SK-N-SH (cell line): ENCODE measurements at regions of chr3 and their contacts with region 1.

Region 1: DNA sequence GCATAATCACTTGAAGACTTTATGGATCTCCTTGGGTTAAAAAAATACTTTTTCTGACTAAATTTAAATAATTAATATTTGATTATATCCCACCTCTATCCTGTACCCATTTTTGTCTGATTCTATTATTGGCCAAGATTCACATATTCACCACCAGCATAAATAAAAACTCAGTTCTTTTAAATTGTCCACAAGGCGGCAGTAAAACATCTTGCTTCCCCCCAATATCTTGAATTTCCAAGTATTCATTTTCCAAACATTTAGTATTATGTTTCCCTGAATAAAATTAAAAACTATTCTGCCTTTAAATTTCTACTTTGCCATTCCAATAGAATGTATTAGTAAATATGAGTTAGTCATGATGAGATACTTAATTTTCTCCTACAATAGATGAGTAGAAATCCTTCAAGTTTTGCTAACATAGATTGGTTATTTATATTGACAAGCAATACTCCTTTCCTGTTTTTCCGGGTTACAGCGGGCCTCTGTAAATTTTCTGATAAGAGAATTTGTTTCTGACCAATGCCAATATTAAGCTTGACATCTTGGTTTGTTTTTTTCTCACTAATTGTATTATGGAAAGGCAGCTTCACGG is 218.7 kb upstream of the MDFIC2 start:
- DNase-seq: peak; percentile 33
- H3K4me3 ChIP-seq: no peak overlapping the region; a peak in 1 of 4 replicates
- H3K27ac ChIP-seq: no peak overlapping the region
- H3K4me1 ChIP-seq: peaks cover 0 to 2% of the 10 kb centered on the region in 2 experiments; a peak in 1 of 4 replicates
- H3K27me3 ChIP-seq: no peaks in the 10 kb centered on the region; the same call in 1 of the 2 replicates
- CTCF ChIP-seq: peak; percentile 79
- EP300 ChIP-seq: no peak
- RAD21 ChIP-seq: peak; percentile 76

Region 2: GRCh38 chr3:70543493-70543892 is 12.3 kb after region 1 on chr3:
- CTCF ChIA-PET with region 1: interaction called, 10 read pairs
- POLR2A ChIA-PET with region 1: no interaction called
- DNase-seq: no peak
- H3K4me3 ChIP-seq: no peak overlapping the region
- H3K27ac ChIP-seq: no peak overlapping the region
- H3K4me1 ChIP-seq: no peaks in the 10 kb centered on the region
- H3K27me3 ChIP-seq: no peaks in the 10 kb centered on the region
- CTCF ChIP-seq: no peak
- EP300 ChIP-seq: no peak
- RAD21 ChIP-seq: no peak